ENCODE measurements at regions of chrX and their contacts with region 1.

Region 1: DNA sequence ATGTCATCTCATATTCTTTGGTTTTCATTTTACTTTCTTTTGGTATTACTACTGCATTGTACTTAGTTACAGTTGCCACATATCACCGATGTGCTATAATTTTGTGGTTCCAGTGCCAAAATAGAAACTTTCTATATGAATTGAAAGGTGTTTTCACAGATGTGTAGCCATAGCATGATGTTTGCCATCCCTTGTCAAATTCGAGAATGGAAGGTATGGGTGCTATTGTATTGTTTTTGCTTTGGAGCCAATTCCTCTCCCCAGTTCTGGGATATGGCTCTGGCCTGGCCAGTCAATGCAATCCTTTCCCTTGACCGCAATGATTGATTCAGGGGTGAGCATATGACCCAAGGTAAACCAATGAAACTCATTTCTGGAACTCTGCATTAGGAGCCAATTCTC is 86.2 kb upstream of the RPS6KA3 start:
- DNase-seq: peak; percentile 19
- H3K4me3 Mint-ChIP-seq: no peak overlapping the region
- H3K27ac Mint-ChIP-seq: no peak overlapping the region
- H3K4me1 Mint-ChIP-seq: peaks cover 24% of the 10 kb centered on the region
- H3K27me3 Mint-ChIP-seq: peaks cover 5% of the 10 kb centered on the region

Region 2: DNA sequence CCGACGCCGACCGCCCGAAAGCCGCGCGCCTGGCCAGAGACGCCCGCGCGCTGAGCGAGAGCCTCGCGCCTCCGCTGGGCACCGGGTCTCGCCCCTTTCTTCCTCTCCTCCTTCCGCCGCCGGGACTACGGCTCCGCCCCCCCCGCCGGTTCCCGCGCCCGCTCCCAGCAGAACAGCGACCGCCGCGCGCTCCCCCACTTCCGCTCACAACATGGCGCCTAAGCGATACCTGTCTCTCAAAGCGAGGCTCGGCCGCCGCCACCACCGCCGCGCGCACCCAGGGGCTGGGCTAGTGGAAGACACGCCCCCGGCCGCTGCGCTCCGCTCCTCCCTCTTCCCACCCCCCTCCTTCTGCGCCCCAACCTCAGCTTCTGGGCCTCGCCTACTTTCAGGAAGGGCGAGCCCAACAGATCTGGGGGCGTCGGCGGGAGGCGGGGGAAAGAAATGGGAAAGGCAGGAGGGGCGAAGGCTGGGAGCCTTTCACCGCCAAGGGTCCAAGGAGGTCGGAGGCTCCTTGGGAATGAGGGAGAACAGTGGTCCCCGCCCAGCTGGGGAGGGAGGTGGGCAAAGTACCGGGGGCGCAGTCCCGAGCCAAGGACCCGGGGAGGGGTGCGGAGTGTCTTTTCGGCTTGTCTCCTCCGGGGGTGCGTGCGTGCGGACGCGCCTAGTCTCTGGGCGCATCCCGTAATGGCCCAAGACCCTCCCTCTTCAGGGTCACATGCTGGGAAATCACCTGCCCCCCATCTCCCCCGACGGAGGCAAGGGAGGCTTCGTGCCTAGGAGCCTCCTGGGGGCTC is 85.9 kb before region 1 on chrX and contains the start of gene RPS6KA3:
- CTCF ChIA-PET with region 1: no interaction called
- POLR2A ChIA-PET with region 1: no interaction called
- intact Hi-C with region 1: loop called (anchors 2 kb)
- DNase-seq: peak; percentile 93
- H3K4me3 Mint-ChIP-seq: peak within 1 kb of the TSS; percentile 95
- H3K27ac Mint-ChIP-seq: peak within 1 kb of the TSS; percentile 99
- H3K4me1 Mint-ChIP-seq: peaks cover 18% of the 10 kb centered on the region
- H3K27me3 Mint-ChIP-seq: no peaks in the 10 kb centered on the region
- total RNA-seq, gene RPS6KA3: 51.8 to 52.0 TPM

Region 3: DNA sequence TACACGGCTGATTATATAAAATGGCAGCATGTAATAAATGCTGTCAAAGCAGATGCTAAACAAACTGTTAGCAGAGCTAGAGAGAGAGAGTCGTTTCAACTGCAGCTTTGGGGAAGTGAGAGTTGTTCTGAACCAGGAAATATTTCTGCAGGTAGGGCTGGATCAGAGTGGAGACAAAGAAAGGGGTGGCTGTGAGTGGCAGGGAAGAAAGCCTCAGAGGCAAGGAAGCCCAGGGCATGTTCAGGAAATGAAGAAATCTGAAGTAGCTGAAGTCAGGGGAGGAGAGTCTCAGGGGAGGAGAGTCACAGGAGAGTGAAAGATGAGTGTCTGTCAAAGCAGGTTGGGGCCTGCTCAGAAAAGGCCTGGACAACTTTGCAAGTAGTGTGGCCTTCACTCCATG is 37.8 kb before region 1 on chrX:
- CTCF ChIA-PET with region 1: no interaction called
- POLR2A ChIA-PET with region 1: no interaction called
- intact Hi-C with region 1: loop called (anchors 5 kb)
- DNase-seq: no peak
- H3K4me3 Mint-ChIP-seq: no peak overlapping the region
- H3K27ac Mint-ChIP-seq: no peak overlapping the region
- H3K4me1 Mint-ChIP-seq: peaks cover 8% of the 10 kb centered on the region
- H3K27me3 Mint-ChIP-seq: no peaks in the 10 kb centered on the region

Region 4: GRCh38 chrX:20461576-20461975 is 108.6 kb after region 1 on chrX:
- CTCF ChIA-PET with region 1: no interaction called
- POLR2A ChIA-PET with region 1: no interaction called
- intact Hi-C with region 1: no loop called
- DNase-seq: no peak
- H3K4me3 Mint-ChIP-seq: no peak overlapping the region
- H3K27ac Mint-ChIP-seq: no peak overlapping the region
- H3K4me1 Mint-ChIP-seq: peaks cover 25% of the 10 kb centered on the region
- H3K27me3 Mint-ChIP-seq: no peaks in the 10 kb centered on the region

Region 5: GRCh38 chrX:20515841-20516461 is 163.0 kb after region 1 on chrX:
- CTCF ChIA-PET with region 1: no interaction called
- POLR2A ChIA-PET with region 1: no interaction called
- intact Hi-C with region 1: loop called (anchors 2 kb)
- DNase-seq: peak; percentile 37
- H3K4me3 Mint-ChIP-seq: no peak overlapping the region
- H3K27ac Mint-ChIP-seq: peak overlapping the region; percentile 58
- H3K4me1 Mint-ChIP-seq: peaks cover 34% of the 10 kb centered on the region
- H3K27me3 Mint-ChIP-seq: peaks cover 13% of the 10 kb centered on the region